ENCODE measurements at regions of chr16 and their contacts with region 1.

Region 1: DNA sequence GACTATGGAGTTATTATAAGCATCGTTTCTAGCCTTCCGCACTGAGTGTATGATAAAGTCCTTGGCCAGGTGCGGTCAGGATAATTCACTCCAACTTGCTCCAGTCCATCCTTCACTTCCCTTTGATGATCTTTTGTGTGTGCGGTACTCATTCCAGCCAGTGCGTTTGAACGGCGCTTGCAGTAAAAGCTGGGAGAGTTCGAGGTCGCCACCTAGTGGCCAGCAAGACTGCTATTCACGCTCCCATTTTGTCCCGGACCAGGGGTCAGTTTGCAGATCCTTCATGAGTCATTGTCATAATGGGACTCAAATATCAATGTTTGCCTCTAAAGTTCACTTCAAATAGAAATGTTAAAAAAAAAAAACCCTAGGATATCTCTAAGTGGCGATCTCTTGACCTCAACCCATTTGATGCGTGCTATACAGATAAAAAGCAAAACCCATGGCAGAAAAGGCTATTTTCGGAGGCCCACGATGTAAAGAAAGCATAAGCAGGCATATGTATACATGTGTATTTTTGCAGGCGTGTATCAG is 417.1 kb downstream of the TMEM114 start:
- DNase-seq: no peak
- ATAC-seq: no peak

Region 2: GRCh38 chr16:7025616-7026190 is 1147.5 kb before region 1 on chr16:
- intact Hi-C with region 1: loop called (anchors 5 kb)
- DNase-seq: no peak
- ATAC-seq: peak; percentile 50

Region 3: GRCh38 chr16:7268182-7268581 is 905.0 kb before region 1 on chr16:
- intact Hi-C with region 1: loop called (anchors 5 kb)
- DNase-seq: no peak
- ATAC-seq: peak; percentile 69

Region 4: GRCh38 chr16:8109510-8110369 is 63.4 kb before region 1 on chr16:
- intact Hi-C with region 1: no loop called
- DNase-seq: no peak
- ATAC-seq: no peak

Measured in Right ventricle myocardium inferior (tissue), 1 donor.